PC-9 (cell line): ENCODE measurements at regions of chr5 and their contacts with region 1.

Region 1: GRCh38 chr5:18465833-18466591 is 831.8 kb downstream of the TAF11L14 start:
- DNase-seq: peak; percentile 37 to 73
- H3K4me3 ChIP-seq: no peak overlapping the region
- H3K27ac ChIP-seq: no peak overlapping the region
- H3K4me1 ChIP-seq: no peaks in the 10 kb centered on the region
- H3K27me3 ChIP-seq: no peaks in the 10 kb centered on the region
- CTCF ChIP-seq: peak; percentile 88

Region 2: DNA sequence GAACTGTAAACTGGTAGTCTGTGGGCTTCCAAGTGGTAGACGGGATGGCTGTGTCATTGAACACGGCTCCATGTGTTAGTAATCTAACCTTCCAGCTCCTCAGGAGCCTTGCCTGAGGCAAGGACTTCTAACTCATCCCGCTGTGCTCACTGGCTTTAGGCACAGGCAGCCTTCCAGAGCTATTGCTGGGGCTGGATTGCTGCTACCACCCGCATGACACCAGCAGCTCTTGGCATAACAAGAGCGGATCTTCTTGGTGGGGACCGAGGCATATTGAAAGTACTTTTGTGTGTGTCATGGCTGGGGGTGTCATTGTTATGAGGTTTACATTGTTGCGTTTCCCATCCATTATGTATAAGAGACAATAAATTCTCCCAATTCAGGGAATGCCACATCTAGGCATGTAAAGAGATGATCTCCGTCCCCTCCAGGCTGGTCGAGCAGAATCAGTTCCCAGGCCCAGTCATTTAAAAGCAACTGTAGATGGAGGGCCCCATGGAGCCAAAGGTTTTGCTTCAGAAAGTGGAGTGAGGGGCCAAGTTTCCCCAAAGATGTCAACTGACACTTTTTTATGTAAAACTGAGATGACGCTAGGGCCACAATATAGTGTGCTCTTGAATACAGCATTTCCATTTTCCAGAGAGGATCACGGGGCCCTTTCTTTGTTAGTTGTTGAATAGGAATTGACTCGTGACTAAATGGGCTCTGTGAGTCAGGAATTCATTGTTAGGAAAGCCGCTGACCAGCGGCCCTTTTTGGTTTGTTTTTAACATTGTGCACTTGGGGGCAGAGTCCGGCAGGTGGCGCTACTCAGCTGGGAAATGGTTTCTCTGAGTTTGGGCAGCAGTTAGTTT is 72.2 kb before region 1 on chr5:
- CTCF ChIA-PET with region 1: no interaction called
- POLR2A ChIA-PET with region 1: no interaction called
- intact Hi-C with region 1: loop called (anchors 1 kb)
- DNase-seq: peak in 1 of 2 experiments; percentile 80
- H3K4me3 ChIP-seq: no peak overlapping the region
- H3K27ac ChIP-seq: no peak overlapping the region
- H3K4me1 ChIP-seq: no peaks in the 10 kb centered on the region
- H3K27me3 ChIP-seq: no peaks in the 10 kb centered on the region
- CTCF ChIP-seq: peak; percentile 95

Region 3: DNA sequence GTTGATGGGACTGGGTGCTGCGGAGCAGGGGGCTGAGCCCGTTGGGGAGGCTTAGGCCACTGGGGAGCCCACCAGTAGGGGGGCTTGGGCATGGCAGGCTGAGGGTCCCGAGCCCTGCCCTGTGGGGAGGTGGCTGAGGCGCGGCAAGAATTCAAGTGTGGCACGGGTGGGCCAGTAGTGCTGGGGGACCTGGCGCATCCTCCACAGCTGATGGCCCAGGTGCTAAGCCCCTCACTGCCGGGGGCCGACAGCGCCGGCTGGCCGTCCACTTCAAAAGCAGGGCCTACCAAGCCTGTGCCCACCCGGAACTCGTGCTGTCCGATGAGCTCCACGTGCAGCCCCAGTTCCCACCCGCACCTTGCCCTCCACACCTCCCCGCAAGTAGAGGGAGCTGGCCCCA is 85.7 kb after region 1 on chr5:
- CTCF ChIA-PET with region 1: interaction called, 20 read pairs
- POLR2A ChIA-PET with region 1: no interaction called
- intact Hi-C with region 1: no loop called
- DNase-seq: no peak
- H3K4me3 ChIP-seq: no peak overlapping the region
- H3K27ac ChIP-seq: no peak overlapping the region
- H3K4me1 ChIP-seq: peaks cover 8% of the 10 kb centered on the region; the same call in 1 of the 2 replicates
- H3K27me3 ChIP-seq: no peaks in the 10 kb centered on the region
- CTCF ChIP-seq: no peak

Region 4: DNA sequence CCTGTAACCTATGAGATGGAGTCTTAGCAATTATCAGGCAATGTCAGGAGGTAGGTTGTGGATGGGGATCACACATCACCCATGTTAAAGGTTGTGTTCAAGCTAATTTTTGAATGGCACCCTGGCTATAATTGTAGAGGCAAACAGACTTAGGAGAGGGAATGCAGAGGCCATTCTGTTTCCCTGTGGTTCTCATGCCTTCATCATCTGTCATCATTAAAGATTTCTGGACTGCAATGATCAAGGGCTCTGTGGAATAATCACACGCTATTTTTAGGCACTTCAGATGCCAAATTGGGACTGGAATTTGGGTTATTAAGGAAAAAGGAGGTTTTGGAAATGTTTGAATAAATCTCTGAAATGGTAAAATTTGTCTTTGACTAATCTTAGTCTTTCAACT is 233.7 kb after region 1 on chr5:
- CTCF ChIA-PET with region 1: interaction called, 12 read pairs
- POLR2A ChIA-PET with region 1: no interaction called
- intact Hi-C with region 1: loop called (anchors 1 kb)
- DNase-seq: no peak
- H3K4me3 ChIP-seq: no peak overlapping the region
- H3K27ac ChIP-seq: no peak overlapping the region
- H3K4me1 ChIP-seq: 0 out of 2 replicates have a peak, but pooled peaks cover 4% of the 10 kb centered on the region
- H3K27me3 ChIP-seq: no peaks in the 10 kb centered on the region
- CTCF ChIP-seq: no peak

Region 5: GRCh38 chr5:18761801-18762200 is 295.8 kb after region 1 on chr5:
- CTCF ChIA-PET with region 1: interaction called, 10 read pairs
- POLR2A ChIA-PET with region 1: no interaction called
- intact Hi-C with region 1: no loop called
- DNase-seq: no peak
- H3K4me3 ChIP-seq: no peak overlapping the region
- H3K27ac ChIP-seq: no peak overlapping the region
- H3K4me1 ChIP-seq: no peaks in the 10 kb centered on the region; the same call in 1 of the 2 replicates
- H3K27me3 ChIP-seq: no peaks in the 10 kb centered on the region
- CTCF ChIP-seq: no peak

Region 6: GRCh38 chr5:18772207-18772874 is 306.3 kb after region 1 on chr5:
- CTCF ChIA-PET with region 1: no interaction called
- POLR2A ChIA-PET with region 1: no interaction called
- intact Hi-C with region 1: loop called (anchors 10 kb)
- DNase-seq: peak; percentile 48 to 56
- H3K4me3 ChIP-seq: no peak overlapping the region
- H3K27ac ChIP-seq: no peak overlapping the region
- H3K4me1 ChIP-seq: no peaks in the 10 kb centered on the region
- H3K27me3 ChIP-seq: no peaks in the 10 kb centered on the region
- CTCF ChIP-seq: peak; percentile 55

Region 7: GRCh38 chr5:19608444-19609002 is 1142.5 kb after region 1 on chr5:
- CTCF ChIA-PET with region 1: interaction called, 4 read pairs
- POLR2A ChIA-PET with region 1: no interaction called
- intact Hi-C with region 1: loop called (anchors 1 kb)
- DNase-seq: no peak
- H3K4me3 ChIP-seq: no peak overlapping the region
- H3K27ac ChIP-seq: no peak overlapping the region
- H3K4me1 ChIP-seq: no peaks in the 10 kb centered on the region
- H3K27me3 ChIP-seq: no peaks in the 10 kb centered on the region
- CTCF ChIP-seq: peak; percentile 65